Heart right ventricle (tissue), 16 donors: ENCODE measurements at regions of chr12 and their contacts with region 1.

Region 1: DNA sequence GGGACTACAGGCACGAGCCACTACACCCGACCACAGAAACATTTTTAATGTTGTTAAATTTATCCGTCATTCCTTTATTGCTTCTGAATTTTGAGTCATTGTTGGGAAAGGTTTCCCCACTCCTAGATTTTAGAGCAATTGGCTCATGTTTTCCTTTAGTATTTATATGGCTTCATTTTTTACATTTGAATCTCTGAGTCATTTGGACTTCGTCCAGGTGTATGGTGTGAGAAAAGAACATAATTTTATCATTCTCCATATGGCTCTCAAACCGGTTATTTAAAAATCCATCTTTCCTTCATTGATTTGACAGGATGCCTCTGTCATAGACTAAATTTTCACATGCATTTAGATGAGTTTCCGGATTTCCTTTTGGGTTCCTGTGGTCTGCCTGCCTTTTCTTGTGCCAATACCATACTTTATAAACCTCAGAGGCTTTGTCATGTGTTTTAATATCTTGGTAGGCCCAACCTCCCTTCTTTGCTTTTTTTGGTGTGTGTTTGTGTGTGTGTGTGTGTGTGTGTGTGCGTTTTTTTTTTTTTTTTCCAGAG is 30.9 kb downstream of the LRTM2 start:
- DNase-seq: no peak
- ATAC-seq: no peak
- H3K4me3 ChIP-seq: no peak overlapping the region
- H3K27ac ChIP-seq: no peak overlapping the region
- H3K4me1 ChIP-seq: no peaks in the 10 kb centered on the region
- H3K27me3 ChIP-seq: peaks cover 0 to 5% (median 0%) of the 10 kb centered on the region in 7 donors
- CTCF ChIP-seq: no peak

Region 2: DNA sequence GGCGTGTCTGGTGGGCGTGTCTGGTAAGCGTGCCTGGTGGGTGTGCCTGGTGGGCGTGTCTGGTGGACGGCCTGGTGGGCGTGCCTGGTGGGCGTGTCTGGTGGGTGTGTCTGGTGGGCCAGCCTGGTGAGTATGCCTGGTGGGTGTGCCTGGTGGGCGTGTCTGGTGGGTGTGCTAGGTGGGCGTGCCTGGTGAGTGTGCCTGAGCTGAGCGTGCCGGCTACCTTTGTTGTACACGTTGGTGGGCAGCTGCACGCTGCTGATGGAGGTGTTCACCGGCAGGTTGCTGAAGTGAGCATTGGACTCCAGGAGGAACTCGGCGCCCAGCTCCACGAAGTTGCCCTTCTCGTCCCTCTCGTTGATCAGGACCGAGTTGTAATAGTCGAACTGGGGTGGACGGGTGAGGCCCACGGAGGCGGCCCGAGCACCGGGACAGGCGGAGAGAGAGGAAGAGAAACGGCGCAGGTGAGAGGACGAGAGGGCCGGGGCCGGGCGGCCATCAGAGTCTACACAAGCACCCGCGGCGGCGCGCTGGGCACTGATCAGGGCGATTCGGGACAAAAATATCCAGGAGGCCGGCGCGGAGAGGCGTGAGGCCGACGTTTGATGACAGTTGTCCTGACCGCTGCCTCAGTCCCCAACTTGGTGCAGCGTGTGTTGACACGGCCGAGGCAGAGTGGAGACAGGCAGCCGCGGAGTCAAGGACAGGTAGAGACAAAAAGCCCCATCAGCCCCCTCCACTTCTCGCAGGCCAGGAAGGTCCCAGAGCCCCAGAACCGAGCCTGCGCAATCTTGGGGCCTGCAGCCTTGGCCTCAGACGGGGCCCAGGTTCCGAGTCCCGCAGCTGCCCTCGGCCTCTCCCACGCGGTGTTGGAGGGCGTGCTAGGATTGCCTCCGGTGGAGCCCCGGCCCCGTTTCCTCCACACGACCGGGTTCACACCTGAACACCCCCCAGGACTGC is 56.7 kb after region 1 on chr12:
- intact Hi-C with region 1: loop called in 1 of 10 experiments (anchors 10 kb)
- DNase-seq: no peak
- ATAC-seq: peak in 3 of 8 donors; percentile 34 to 44 (median 35)
- H3K4me3 ChIP-seq: peak overlapping the region in 3 of 10 donors; percentile 11 to 24 (median 22)
- H3K27ac ChIP-seq: no peak overlapping the region
- H3K4me1 ChIP-seq: peaks cover 0 to 6% (median 0%) of the 10 kb centered on the region in 9 donors
- H3K27me3 ChIP-seq: peaks cover 0 to 12% (median 5%) of the 10 kb centered on the region in 7 donors
- CTCF ChIP-seq: no peak